ENCODE measurements at regions of chr3 and their contacts with region 1.

Region 1: DNA sequence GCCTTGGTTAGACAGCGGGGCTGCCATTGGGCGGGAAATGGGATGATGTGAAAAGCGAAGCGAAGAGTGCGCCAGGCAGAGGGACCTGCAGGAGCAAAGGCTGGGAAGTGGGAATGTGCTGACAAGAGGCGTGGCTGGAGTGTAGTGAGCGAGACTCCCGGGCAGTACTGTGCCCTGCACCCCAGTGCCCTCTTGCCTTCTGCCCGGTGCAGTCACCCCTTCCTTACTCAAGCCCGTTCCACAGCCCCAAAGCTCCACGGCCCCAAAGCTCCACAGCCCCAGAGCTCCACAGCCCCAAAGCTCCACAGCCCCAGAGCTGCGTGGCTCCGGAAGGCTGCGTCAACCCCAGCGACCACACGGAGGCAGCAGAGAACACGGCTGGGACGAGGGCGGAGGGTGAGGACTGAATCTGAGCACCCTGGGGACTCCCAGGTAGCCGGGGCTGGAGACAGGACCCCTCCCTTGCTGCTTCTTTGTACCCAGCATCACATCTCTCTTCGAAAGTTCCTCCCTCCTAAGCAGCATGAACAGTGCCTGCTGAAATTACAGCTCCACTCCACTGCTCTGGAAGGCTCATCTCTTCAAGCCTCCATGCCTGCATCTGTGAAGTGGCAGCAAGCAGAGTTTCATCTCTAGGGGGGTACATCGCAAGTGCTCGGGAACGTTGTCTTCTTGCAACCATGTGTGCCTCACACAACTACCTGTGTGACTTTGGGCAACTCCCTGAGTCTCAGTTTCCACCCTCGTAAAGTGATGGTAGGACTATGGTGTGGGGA is 108.9 kb downstream of the FBLN2 start:
- DNase-seq: peak; percentile 48
- H3K4me3 ChIP-seq: no peak overlapping the region
- H3K27ac ChIP-seq: no peak overlapping the region
- H3K4me1 ChIP-seq: no peaks in the 10 kb centered on the region
- H3K27me3 ChIP-seq: peaks cover 10% of the 10 kb centered on the region
- CTCF ChIP-seq: peak; percentile 63

Region 2: GRCh38 chr3:13379201-13379830 is 278.5 kb before region 1 on chr3:
- intact Hi-C with region 1: no loop called
- DNase-seq: no peak
- H3K4me3 ChIP-seq: no peak overlapping the region
- H3K27ac ChIP-seq: no peak overlapping the region
- H3K4me1 ChIP-seq: no peaks in the 10 kb centered on the region
- H3K27me3 ChIP-seq: no peaks in the 10 kb centered on the region
- CTCF ChIP-seq: no peak

Region 3: DNA sequence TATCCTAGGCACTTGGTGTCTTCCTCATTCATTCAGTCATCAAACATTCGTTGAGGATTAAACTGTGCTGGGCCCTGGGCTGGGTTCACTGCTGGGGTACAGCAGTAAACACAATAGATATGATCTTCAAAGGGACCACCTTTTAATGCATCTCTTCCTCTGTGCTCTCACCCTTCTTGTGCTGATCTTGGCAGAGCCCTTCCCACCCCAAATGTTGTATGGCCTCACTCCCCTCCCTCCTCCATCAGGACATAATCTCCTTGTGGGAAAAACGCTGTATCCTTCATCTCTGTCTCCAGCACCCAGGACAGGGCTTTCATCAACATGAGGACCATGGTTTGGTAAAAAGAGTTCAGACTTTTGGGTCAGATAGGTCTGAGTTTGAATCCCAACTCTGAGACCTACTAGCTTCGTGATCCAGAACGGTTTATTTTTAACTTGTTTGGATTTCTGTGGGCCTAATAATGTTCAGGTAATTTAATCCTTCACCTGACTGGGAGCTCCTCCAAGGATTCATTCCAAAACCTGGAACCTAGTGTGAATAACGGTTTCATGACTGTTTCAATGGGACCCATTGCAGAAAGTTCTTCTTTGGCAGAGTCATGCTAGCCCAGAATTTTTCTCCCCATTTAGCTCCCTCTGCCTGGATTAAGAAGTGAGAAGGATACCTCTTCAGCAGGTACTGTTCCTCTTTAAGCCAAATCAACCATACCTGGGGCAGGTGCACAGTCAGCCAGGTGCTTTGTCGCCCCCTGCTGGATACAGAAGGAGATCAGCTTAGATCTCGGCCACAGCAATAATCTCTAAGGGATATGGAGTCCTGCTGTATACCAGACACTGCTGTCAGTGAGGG is 227.2 kb after region 1 on chr3:
- intact Hi-C with region 1: loop called (anchors 2 kb)
- DNase-seq: peak; percentile 58
- H3K4me3 ChIP-seq: no peak overlapping the region
- H3K27ac ChIP-seq: no peak overlapping the region
- H3K4me1 ChIP-seq: peaks cover 4% of the 10 kb centered on the region
- H3K27me3 ChIP-seq: peaks cover 11% of the 10 kb centered on the region
- CTCF ChIP-seq: peak; percentile 54

Region 4: GRCh38 chr3:14042680-14043079 is 384.8 kb after region 1 on chr3:
- intact Hi-C with region 1: no loop called
- DNase-seq: no peak
- H3K4me3 ChIP-seq: no peak overlapping the region
- H3K27ac ChIP-seq: no peak overlapping the region
- H3K4me1 ChIP-seq: no peaks in the 10 kb centered on the region
- H3K27me3 ChIP-seq: no peaks in the 10 kb centered on the region
- CTCF ChIP-seq: no peak

Measured in colonic mucosa (tissue), 4 donors.